Sigmoid colon (tissue), 7 donors: ENCODE measurements at regions of chr20 and their contacts with region 1.

Region 1: GRCh38 chr20:57748601-57749130 is 38.9 kb upstream of the PMEPA1 start:
- DNase-seq: peak; percentile 90
- H3K4me3 ChIP-seq: peak overlapping the region; percentile 22 to 47 (median 44)
- H3K27ac ChIP-seq: peak overlapping the region; percentile 70 to 90 (median 82)
- H3K4me1 ChIP-seq: peaks cover 0 to 34% (median 27%) of the 10 kb centered on the region in 4 donors
- H3K27me3 ChIP-seq: no peaks in the 10 kb centered on the region
- CTCF ChIP-seq: no peak
- EP300 ChIP-seq: peak in 2 of 4 donors; percentile 43 to 54
- POLR2A ChIP-seq: no peak

Region 2: GRCh38 chr20:57680131-57680716 is 68.4 kb before region 1 on chr20:
- intact Hi-C with region 1: loop called (anchors 10 kb)
- DNase-seq: no peak
- H3K4me3 ChIP-seq: no peak overlapping the region
- H3K27ac ChIP-seq: no peak overlapping the region
- H3K4me1 ChIP-seq: peaks cover 0 to 48% (median 26%) of the 10 kb centered on the region in 4 donors
- H3K27me3 ChIP-seq: no peaks in the 10 kb centered on the region
- CTCF ChIP-seq: no peak
- EP300 ChIP-seq: no peak
- POLR2A ChIP-seq: no peak

Region 3: DNA sequence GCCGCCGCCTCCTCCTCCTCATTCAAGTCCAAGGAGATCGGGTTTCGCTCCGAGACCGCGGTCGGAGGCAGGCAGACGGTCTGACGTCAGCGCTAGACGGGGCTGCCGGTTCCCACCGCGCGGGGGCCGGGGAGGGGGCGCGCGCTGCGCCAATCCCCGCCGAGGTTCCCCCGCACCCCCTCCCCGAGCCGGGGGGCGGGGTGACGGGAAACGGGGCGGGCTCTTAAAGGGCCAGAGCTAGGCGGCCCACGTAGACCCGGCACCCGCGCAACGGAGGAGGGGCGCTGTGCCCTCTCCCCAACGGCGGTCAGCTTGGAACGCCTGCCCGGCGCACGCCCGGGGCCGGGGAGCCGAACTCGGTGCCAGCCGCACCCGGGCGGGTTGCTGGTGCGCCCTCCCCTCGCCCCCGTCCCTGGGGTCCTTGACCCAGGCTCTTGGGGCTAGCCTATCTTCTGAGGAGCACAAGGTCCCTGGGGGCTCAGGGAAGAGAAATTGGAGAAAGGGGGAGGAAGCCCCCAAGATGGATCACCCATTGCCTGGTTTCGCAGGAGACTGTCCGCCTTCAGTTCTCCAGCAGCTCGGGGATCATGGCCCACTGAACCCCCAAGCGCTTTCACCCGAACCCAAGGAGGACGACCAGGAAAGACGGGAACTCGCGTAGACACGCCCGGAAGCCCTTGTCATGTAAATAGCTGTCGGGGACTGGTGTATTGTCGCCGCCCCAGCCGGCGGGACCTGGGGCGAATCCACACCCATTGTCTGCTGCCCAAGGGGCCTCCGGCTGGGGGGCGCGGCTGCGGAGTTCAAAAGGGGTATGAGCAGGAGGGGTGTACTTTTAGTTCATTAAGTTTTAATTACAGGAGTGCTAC is 38.5 kb before region 1 on chr20 and contains the start of gene PMEPA1:
- intact Hi-C with region 1: loop called (anchors 2 kb)
- DNase-seq: peak; percentile 98
- H3K4me3 ChIP-seq: peak within 1 kb of the TSS; percentile 71 to 94 (median 82)
- H3K27ac ChIP-seq: peak within 1 kb of the TSS; percentile 83 to 96 (median 92)
- H3K4me1 ChIP-seq: peaks cover 0 to 64% (median 45%) of the 10 kb centered on the region in 4 donors
- H3K27me3 ChIP-seq: no peaks in the 10 kb centered on the region
- CTCF ChIP-seq: peak in 1 of 4 experiments; percentile 13
- EP300 ChIP-seq: peak in 2 of 4 donors; percentile 30 to 55
- POLR2A ChIP-seq: peak; percentile 58 to 61
- total RNA-seq, gene PMEPA1: 3.9 to 23.3 (median 7.5) TPM

Region 4: GRCh38 chr20:57718490-57719271 is 30.0 kb before region 1 on chr20:
- intact Hi-C with region 1: loop called (anchors 2 kb)
- DNase-seq: peak; percentile 99
- H3K4me3 ChIP-seq: peak overlapping the region in 3 of 4 donors; percentile 34 to 40 (median 37)
- H3K27ac ChIP-seq: peak overlapping the region; percentile 25 to 55 (median 34)
- H3K4me1 ChIP-seq: peaks cover 0 to 37% (median 17%) of the 10 kb centered on the region in 4 donors
- H3K27me3 ChIP-seq: no peaks in the 10 kb centered on the region
- CTCF ChIP-seq: no peak
- EP300 ChIP-seq: peak in 1 of 4 donors; percentile 50
- POLR2A ChIP-seq: no peak

Region 5: DNA sequence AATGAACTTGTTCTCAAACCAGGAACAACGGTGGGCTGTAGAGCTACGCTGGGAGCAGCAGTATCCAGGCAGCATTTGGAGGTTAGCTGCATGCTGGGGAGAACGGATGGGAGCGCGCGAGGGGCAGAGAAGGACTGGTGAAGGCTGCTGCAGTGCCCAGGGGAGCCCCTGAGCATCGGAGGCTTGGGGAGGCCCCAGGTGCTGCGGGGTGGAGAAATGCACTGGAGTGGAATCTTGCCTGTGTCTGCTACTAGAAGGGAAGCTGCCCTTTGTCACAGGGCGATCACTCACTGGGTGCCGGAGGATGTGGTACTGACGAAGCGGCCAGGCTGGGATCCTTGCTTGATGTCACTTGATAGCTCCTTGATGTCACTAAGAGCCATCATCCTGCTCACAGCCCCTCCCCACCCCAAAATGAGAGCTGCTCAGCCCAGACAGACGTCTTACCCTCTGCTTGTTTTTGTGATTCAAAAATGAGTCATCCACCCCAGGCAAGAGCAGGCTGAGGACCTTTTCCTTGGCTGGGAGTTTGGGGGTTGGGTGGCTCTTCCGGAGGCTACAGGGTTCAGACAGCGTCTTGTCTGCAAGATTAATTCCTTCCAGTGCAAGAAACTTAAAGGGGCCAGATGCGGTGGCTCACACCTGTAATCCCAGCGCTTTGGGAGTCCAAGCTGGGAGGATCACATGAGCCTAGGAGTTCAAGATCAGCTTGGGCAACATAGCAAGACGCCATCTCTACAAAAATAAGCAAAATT is 23.8 kb after region 1 on chr20:
- intact Hi-C with region 1: no loop called
- DNase-seq: peak; percentile 33
- H3K4me3 ChIP-seq: no peak overlapping the region
- H3K27ac ChIP-seq: no peak overlapping the region
- H3K4me1 ChIP-seq: peaks cover 0 to 4% (median 0%) of the 10 kb centered on the region in 4 donors
- H3K27me3 ChIP-seq: no peaks in the 10 kb centered on the region
- CTCF ChIP-seq: no peak
- EP300 ChIP-seq: no peak
- POLR2A ChIP-seq: no peak

Region 6: DNA sequence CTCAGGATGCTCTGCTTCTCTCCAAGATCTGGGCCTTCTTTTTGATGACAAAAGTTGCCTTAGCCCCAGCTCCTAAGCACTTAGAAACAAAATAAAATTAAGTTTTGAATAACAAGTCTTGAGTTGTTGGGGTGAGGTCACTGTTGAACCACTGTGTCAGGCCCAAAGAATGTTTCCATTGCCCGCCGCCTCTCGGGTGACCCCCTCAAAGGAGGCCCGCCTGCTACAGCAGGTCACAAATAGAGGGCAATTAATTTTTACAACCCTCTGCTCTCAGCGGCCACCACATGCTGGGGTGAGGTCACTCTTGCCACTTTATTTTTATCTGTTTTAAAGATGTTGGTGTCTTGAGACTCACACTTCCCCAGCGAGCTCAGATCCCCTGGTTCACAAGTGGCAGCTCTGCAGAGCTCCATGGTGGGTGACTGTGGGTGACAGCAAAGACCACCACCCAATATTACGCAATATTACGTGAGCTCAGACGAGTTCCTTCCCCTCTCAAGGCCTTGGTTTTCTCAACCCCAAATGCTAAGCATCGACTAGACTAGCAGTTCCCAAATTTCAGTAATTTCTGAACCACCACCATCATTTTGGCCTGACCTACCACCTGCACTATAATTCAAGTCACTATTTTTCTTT is 208.9 kb after region 1 on chr20:
- intact Hi-C with region 1: loop called (anchors 2 kb)
- DNase-seq: no peak
- H3K4me3 ChIP-seq: no peak overlapping the region
- H3K27ac ChIP-seq: peak overlapping the region in 3 of 4 donors; percentile 25 to 78 (median 40)
- H3K4me1 ChIP-seq: peaks cover 0 to 38% (median 17%) of the 10 kb centered on the region in 4 donors
- H3K27me3 ChIP-seq: no peaks in the 10 kb centered on the region
- CTCF ChIP-seq: no peak
- EP300 ChIP-seq: no peak
- POLR2A ChIP-seq: no peak